A673 (cell line): ENCODE measurements at regions of chr12 and their contacts with region 1.

Region 1: GRCh38 chr12:126474523-126475102 is 1409.4 kb downstream of the AACS start:
- DNase-seq: no peak
- H3K4me3 ChIP-seq: no peak overlapping the region
- H3K27ac ChIP-seq: no peak overlapping the region
- H3K4me1 ChIP-seq: no peaks in the 10 kb centered on the region
- H3K27me3 ChIP-seq: no peaks in the 10 kb centered on the region
- CTCF ChIP-seq: no peak

Region 2: GRCh38 chr12:126874427-126875026 is 399.9 kb after region 1 on chr12:
- CTCF ChIA-PET with region 1: no interaction called
- POLR2A ChIA-PET with region 1: no interaction called
- intact Hi-C with region 1: loop called (anchors 10 kb)
- DNase-seq: peak; percentile 87
- H3K4me3 ChIP-seq: no peak overlapping the region
- H3K27ac ChIP-seq: no peak overlapping the region
- H3K4me1 ChIP-seq: peaks cover 6% of the 10 kb centered on the region
- H3K27me3 ChIP-seq: no peaks in the 10 kb centered on the region
- CTCF ChIP-seq: peak; percentile 99